GM12878 (cell line): ENCODE measurements at regions of chr18 and their contacts with region 1.

Region 1: DNA sequence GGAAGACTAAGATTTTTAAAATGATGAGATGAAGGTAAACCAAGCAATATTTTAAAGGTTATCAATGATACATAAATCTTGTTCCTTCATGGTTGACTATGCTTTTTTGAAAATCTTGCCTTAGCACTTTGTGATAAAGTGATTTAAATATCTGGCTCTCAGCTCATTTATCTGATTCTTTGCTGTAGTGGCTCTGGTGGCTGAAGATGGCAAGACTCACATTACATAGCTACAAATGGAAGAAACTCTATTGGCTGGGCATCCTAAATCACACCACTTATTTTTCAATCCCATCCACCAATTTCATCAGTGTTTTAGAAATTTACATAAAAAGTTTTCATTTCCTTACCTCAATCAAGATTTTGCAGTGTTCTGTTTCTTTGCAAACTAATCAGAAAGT is 16.6 kb upstream of the APCDD1 start:
- DNase-seq: no peak
- ATAC-seq: peak; percentile 65
- H3K4me3 ChIP-seq: no peak overlapping the region
- H3K27ac ChIP-seq: no peak overlapping the region
- H3K4me1 ChIP-seq: no peaks in the 10 kb centered on the region
- H3K27me3 ChIP-seq: no peaks in the 10 kb centered on the region; a peak in 1 of 4 replicates
- CTCF ChIP-seq: peak; percentile 33 to 49 (median 44); a peak in 3 of 6 replicates
- EP300 ChIP-seq: no peak
- POLR2A ChIP-seq: no peak
- RAD21 ChIP-seq: peak; percentile 44; the same call in 1 of the 2 replicates

Region 2: DNA sequence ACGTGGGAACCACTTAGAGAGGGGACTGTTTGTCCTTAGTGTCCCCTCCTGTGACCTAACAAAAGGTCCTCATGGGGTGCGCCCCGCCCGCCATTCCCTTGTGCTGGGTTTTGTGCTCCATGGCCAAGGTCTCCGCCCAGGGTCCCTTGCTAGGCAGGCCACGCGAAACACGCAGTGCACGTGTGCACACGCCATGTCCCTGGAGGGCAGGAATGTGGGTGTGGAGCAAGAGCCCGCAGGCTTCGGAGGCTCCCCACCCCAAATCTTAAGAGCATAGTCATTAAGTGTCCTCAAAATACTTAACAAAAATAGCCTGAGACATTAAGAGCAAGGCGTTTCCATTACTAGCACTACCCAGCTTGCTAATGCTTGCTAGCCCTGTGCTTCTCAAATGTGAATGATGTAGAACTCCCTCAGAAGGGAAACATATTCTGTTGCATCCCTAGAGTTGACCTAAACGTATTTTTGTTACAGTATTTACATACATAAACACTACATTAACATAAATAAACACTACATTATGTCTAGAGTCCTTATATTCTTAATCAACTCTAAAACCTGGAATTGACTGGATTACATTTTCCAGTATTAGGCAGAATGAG is 101.0 kb before region 1 on chr18:
- CTCF ChIA-PET with region 1: interaction called, 3 read pairs
- POLR2A ChIA-PET with region 1: no interaction called
- RAD21 ChIA-PET with region 1: no interaction called
- SMC1A ChIA-PET with region 1: no interaction called
- in situ Hi-C with region 1: no loop called
- intact Hi-C with region 1: loop called (anchors 10 kb)
- DNase-seq: no peak
- ATAC-seq: no peak
- H3K4me3 ChIP-seq: no peak overlapping the region
- H3K27ac ChIP-seq: no peak overlapping the region
- H3K4me1 ChIP-seq: no peaks in the 10 kb centered on the region
- H3K27me3 ChIP-seq: no peaks in the 10 kb centered on the region; a peak in 2 of 4 replicates
- CTCF ChIP-seq: no peak
- EP300 ChIP-seq: no peak
- POLR2A ChIP-seq: no peak
- RAD21 ChIP-seq: no peak